Caco-2 (cell line): ENCODE measurements at regions of chr4 and their contacts with region 1.

Region 1: DNA sequence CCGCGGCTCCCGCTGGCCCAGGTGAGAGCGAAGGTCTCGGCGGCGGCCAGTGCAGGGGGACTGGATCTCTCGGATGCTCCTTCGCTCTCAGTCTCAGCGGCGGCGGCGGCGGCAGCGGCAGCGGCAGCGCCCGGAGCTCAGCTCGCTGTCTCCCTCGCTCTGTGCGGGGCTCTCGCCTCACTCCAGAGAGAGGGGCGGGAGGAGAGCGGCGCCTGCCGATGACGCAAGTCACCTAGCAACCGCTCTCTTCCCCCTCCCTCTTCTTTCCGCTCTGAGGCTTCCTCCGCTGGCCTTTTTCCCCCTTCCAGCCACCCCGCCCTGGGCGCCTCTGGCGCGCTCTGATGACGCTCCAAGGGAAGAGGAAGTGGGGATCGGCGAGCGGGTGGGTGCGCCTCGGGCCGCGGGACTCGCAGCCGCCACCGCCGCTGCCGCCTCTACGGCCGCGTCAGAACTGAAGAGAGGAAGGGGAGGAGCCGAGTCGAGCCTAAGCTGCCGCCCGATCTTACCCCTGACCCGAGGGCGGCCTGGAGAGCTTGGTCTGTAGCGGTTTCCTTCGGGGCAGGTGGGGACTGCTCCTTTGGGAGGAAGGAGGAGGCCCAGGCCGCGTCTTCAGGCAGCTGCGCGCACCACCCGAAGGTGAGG is at the start of gene FBXW7:
- DNase-seq: peak; percentile 99
- H3K4me3 ChIP-seq: peak within 1 kb of the TSS; percentile 93
- H3K4me3 Mint-ChIP-seq: peak within 1 kb of the TSS; percentile 98
- H3K27ac Mint-ChIP-seq: peak within 1 kb of the TSS; percentile 97
- H3K4me1 ChIP-seq: peaks cover 11% of the 10 kb centered on the region
- H3K4me1 Mint-ChIP-seq: peaks cover 16% of the 10 kb centered on the region
- H3K27me3 ChIP-seq: no peaks in the 10 kb centered on the region
- H3K27me3 Mint-ChIP-seq: no peaks in the 10 kb centered on the region
- CTCF ChIP-seq: no peak
- total RNA-seq, gene FBXW7: 34.1 and 36.1 TPM in 2 replicates

Region 2: GRCh38 chr4:152398060-152398459 is 138.0 kb before region 1 on chr4:
- CTCF ChIA-PET with region 1: no interaction called
- POLR2A ChIA-PET with region 1: no interaction called
- intact Hi-C with region 1: no loop called
- DNase-seq: no peak
- H3K4me3 ChIP-seq: no peak overlapping the region
- H3K4me3 Mint-ChIP-seq: no peak overlapping the region
- H3K27ac Mint-ChIP-seq: no peak overlapping the region
- H3K4me1 ChIP-seq: no peaks in the 10 kb centered on the region
- H3K4me1 Mint-ChIP-seq: no peaks in the 10 kb centered on the region
- H3K27me3 ChIP-seq: no peaks in the 10 kb centered on the region
- H3K27me3 Mint-ChIP-seq: no peaks in the 10 kb centered on the region
- CTCF ChIP-seq: peak in 1 of 2 experiments; percentile 31

Region 3: GRCh38 chr4:152424977-152425376 is 111.0 kb before region 1 on chr4:
- CTCF ChIA-PET with region 1: no interaction called
- POLR2A ChIA-PET with region 1: no interaction called
- intact Hi-C with region 1: loop called (anchors 1 kb)
- DNase-seq: no peak
- H3K4me3 ChIP-seq: no peak overlapping the region
- H3K4me3 Mint-ChIP-seq: peak overlapping the region; percentile 23
- H3K27ac Mint-ChIP-seq: peak overlapping the region; percentile 70
- H3K4me1 ChIP-seq: peaks cover 49% of the 10 kb centered on the region
- H3K4me1 Mint-ChIP-seq: peaks cover 27% of the 10 kb centered on the region
- H3K27me3 ChIP-seq: no peaks in the 10 kb centered on the region
- H3K27me3 Mint-ChIP-seq: no peaks in the 10 kb centered on the region
- CTCF ChIP-seq: no peak

Region 4: DNA sequence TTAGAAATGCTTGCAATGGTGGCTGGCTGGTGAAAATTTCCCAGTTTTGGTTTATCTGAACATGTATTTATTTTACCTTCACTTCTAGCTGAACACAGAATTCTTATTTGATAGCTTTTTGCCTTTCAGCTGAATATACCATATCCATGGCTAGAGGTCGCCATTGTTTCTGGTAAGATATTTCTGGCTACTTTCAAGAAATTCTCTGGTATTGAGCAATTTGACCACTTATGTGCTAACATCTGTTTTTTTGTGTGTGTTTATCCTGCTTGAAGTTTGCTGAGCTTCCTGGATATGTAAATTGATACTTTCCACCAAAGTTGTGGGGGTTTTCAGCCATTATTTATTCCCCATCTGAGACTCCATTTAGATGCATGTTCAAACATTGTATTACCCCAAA is 75.5 kb before region 1 on chr4:
- CTCF ChIA-PET with region 1: interaction called, 3 read pairs
- POLR2A ChIA-PET with region 1: no interaction called
- intact Hi-C with region 1: loop called (anchors 1 kb)
- DNase-seq: peak in 1 of 2 experiments; percentile 47
- H3K4me3 ChIP-seq: no peak overlapping the region
- H3K4me3 Mint-ChIP-seq: no peak overlapping the region
- H3K27ac Mint-ChIP-seq: no peak overlapping the region
- H3K4me1 ChIP-seq: peaks cover 27% of the 10 kb centered on the region
- H3K4me1 Mint-ChIP-seq: peaks cover 22% of the 10 kb centered on the region
- H3K27me3 ChIP-seq: no peaks in the 10 kb centered on the region
- H3K27me3 Mint-ChIP-seq: no peaks in the 10 kb centered on the region
- CTCF ChIP-seq: peak in 1 of 2 experiments; percentile 17

Region 5: DNA sequence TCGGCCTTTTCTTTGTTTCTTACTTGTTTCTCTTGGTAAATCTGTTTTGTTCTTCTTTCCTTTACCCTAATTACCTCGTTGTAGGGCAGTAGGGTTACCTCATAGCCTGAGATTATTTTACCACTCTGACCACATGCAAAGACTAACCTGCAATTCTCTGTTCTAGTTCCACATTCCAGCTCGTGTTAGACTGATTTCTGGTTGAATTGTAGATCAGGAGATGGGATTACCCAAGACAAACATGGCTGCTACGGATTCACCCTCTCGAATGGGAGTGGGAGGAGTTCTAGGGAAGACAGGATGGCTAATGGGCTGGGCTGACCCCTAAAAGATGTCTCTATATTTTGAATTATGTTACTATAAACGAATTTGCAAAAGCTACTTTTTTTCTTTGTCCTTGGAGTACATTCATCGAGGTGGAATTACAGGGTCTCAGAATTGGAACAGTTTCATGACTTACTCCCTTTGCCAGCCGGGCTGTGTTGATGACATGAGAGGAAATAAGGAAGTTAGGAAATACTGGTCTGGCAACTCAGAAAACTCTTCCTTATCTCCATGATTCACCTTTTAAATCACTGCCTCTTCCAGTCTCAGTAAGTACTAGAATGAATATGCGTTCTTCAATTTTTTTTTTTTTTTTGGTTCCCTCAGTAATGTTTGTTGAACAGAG is 36.5 kb after region 1 on chr4:
- CTCF ChIA-PET with region 1: no interaction called
- POLR2A ChIA-PET with region 1: no interaction called
- intact Hi-C with region 1: loop called (anchors 5 kb)
- DNase-seq: peak in 1 of 2 experiments; percentile 21
- H3K4me3 ChIP-seq: no peak overlapping the region
- H3K4me3 Mint-ChIP-seq: peak overlapping the region; percentile 65
- H3K27ac Mint-ChIP-seq: peak overlapping the region; percentile 81
- H3K4me1 ChIP-seq: peaks cover 10% of the 10 kb centered on the region
- H3K4me1 Mint-ChIP-seq: peaks cover 11% of the 10 kb centered on the region
- H3K27me3 ChIP-seq: no peaks in the 10 kb centered on the region
- H3K27me3 Mint-ChIP-seq: no peaks in the 10 kb centered on the region
- CTCF ChIP-seq: no peak

Region 6: DNA sequence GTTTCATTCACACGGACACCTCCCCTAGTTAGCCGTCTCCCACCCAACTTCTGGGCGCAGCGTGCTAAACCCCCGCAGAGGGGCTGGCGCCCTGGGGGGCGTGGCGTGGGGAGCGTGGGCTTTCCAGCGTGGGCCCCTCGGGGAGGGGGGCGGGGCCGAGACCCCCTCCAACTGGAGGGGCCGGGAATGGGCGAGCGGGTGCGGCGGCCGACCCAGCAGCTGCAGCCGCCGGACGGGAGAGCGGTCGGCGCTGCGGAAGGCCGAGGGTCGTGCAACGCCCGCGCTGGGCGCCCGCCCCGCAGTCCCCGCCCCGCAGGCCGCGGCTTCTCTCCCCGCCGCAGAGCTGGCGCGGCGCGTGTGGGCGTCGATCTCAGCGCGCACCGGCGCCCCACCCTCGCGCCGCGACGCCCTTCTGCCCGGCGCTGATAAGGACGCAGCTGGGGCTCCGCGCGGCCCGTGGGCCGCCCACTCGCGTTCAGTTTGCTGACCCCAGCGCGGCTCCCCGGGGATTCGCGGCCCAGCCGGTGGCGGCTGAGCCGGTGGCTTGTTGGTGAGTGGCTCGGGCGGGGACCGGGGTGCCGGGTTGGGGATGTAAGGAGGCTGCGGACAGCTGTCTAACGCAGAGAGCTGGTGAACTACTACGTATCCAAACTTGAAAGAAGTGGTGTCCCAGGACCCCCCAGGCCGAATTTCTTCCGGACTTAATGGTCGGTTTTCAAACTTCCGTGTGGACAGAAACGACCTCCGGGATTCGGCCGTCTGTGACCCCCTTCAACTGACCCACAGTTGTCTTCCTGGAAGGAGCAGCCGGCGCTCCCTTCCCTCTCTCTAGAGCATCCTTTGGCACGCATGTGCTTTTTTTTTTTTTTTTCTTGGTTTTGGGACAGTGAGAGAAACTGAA is 401.6 kb after region 1 on chr4:
- CTCF ChIA-PET with region 1: no interaction called
- POLR2A ChIA-PET with region 1: no interaction called
- intact Hi-C with region 1: no loop called
- DNase-seq: peak in 1 of 2 experiments; percentile 28
- H3K4me3 ChIP-seq: peak overlapping the region; percentile 60
- H3K4me3 Mint-ChIP-seq: peak overlapping the region; percentile 80
- H3K27ac Mint-ChIP-seq: no peak overlapping the region
- H3K4me1 ChIP-seq: no peaks in the 10 kb centered on the region
- H3K4me1 Mint-ChIP-seq: peaks cover 7% of the 10 kb centered on the region
- H3K27me3 ChIP-seq: no peaks in the 10 kb centered on the region; the same call in 1 of the 2 replicates
- H3K27me3 Mint-ChIP-seq: peaks cover 4% of the 10 kb centered on the region
- CTCF ChIP-seq: no peak